Common myeloid progenitor, CD34-positive (primary cell): ENCODE measurements at regions of chr11 and their contacts with region 1.

Region 1: GRCh38 chr11:117178210-117179034 is at the start of gene SIDT2:
- DNase-seq: peak; percentile 86 to 95 (median 92)
- H3K4me3 ChIP-seq: peak within 1 kb of the TSS; percentile 46 to 82 (median 77)
- H3K27ac ChIP-seq: peak within 1 kb of the TSS in 1 of 2 experiments; percentile 70
- H3K4me1 ChIP-seq: peaks cover 8 to 31% (median 27%) of the 10 kb centered on the region in 4 experiments
- H3K27me3 ChIP-seq: no peaks in the 10 kb centered on the region

Region 2: GRCh38 chr11:117143871-117144476 is 34.4 kb before region 1 on chr11 and contains the start of gene PAFAH1B2:
- CTCF ChIA-PET with region 1: interaction called, 19 read pairs
- POLR2A ChIA-PET with region 1: interaction called, 17 read pairs
- DNase-seq: peak; percentile 93 to 96 (median 96)
- H3K4me3 ChIP-seq: peak within 1 kb of the TSS; percentile 65 to 99 (median 96)
- H3K27ac ChIP-seq: peak within 1 kb of the TSS; percentile 88 to 91
- H3K4me1 ChIP-seq: peaks cover 12 to 21% (median 17%) of the 10 kb centered on the region in 4 experiments
- H3K27me3 ChIP-seq: no peaks in the 10 kb centered on the region

Region 3: DNA sequence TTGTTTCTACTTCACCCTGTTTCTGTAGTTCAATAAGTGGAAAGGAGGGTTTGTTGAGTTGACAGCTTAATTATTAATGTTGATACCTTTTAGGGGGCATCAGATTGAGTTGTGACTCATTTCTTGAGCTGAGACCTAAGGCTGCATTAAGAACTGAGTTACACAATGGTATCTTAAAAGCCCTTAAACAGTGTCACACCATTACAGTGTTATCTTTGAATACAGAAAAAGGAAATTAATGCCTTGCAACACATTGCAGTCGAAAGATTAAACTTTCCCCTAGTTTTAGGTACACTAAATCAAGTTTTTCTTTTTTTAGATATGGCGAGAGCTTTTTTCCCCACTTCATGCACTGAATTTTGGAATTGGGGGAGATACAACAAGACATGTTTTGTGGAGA is 17.6 kb before region 1 on chr11:
- CTCF ChIA-PET with region 1: interaction called, 17 read pairs
- POLR2A ChIA-PET with region 1: interaction called, 5 read pairs
- DNase-seq: peak; percentile 39 to 82 (median 63)
- H3K4me3 ChIP-seq: no peak overlapping the region
- H3K27ac ChIP-seq: no peak overlapping the region
- H3K4me1 ChIP-seq: peaks cover 0 to 8% (median 3%) of the 10 kb centered on the region in 4 experiments
- H3K27me3 ChIP-seq: no peaks in the 10 kb centered on the region

Region 4: GRCh38 chr11:117199061-117199915 is 20.9 kb after region 1 on chr11 and contains the start of gene TAGLN:
- CTCF ChIA-PET with region 1: interaction called, 59 read pairs
- POLR2A ChIA-PET with region 1: interaction called, 3 read pairs
- DNase-seq: no peak
- H3K4me3 ChIP-seq: peak within 1 kb of the TSS in 2 of 7 experiments; percentile 28 to 33
- H3K27ac ChIP-seq: no peak within 1 kb of the TSS
- H3K4me1 ChIP-seq: peaks cover 0 to 7% (median 2%) of the 10 kb centered on the region in 4 experiments
- H3K27me3 ChIP-seq: no peaks in the 10 kb centered on the region

Region 5: DNA sequence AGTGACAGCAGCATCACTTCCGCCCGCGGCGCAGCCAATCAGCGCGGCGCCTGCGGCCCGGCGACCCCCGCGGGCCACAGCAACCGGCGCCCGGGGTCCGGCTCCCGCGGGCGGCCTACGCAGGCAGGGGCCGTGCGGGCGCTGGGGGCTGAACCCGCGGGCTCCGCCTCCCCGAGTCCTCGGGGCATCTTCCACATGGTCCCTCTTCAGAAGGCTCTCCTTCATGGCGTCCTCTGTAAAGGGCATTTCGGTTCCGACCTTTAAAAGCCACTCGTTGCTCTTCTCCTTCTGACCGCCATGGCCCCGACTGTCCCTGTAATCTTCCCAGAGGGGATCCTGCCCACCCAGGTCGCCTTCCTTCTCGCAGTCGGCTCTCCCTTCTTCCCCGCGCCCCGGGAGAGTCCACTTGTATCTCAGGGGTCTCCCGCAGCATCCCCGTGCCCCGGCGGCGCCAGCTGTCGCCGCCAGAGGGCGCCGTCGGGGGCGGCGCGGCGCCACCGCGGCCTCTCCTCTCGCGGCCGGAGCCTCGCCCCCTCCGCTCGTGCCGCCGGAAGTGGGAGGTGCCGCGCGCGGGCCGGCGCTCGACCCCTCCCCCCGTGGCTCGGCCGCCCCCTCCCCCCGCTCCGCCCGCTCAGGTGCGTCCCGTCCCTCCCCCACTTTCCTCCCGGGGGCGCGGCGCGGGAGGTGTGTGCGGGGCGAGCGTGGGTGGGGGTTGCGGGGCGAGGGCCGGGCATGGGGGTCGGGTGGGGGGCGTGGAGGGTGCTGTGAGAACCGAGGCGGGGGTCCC is 53.9 kb after region 1 on chr11 and contains the start of gene RNF214:
- CTCF ChIA-PET with region 1: interaction called, 100 read pairs
- POLR2A ChIA-PET with region 1: interaction called, 3 read pairs
- DNase-seq: peak; percentile 68 to 81 (median 80)
- H3K4me3 ChIP-seq: peak within 1 kb of the TSS; percentile 93 to 99 (median 95)
- H3K27ac ChIP-seq: peak within 1 kb of the TSS; percentile 84 to 90
- H3K4me1 ChIP-seq: peaks cover 15 to 31% (median 25%) of the 10 kb centered on the region in 4 experiments
- H3K27me3 ChIP-seq: no peaks in the 10 kb centered on the region